ENCODE measurements at regions of chr1 and their contacts with region 1.

Region 1: DNA sequence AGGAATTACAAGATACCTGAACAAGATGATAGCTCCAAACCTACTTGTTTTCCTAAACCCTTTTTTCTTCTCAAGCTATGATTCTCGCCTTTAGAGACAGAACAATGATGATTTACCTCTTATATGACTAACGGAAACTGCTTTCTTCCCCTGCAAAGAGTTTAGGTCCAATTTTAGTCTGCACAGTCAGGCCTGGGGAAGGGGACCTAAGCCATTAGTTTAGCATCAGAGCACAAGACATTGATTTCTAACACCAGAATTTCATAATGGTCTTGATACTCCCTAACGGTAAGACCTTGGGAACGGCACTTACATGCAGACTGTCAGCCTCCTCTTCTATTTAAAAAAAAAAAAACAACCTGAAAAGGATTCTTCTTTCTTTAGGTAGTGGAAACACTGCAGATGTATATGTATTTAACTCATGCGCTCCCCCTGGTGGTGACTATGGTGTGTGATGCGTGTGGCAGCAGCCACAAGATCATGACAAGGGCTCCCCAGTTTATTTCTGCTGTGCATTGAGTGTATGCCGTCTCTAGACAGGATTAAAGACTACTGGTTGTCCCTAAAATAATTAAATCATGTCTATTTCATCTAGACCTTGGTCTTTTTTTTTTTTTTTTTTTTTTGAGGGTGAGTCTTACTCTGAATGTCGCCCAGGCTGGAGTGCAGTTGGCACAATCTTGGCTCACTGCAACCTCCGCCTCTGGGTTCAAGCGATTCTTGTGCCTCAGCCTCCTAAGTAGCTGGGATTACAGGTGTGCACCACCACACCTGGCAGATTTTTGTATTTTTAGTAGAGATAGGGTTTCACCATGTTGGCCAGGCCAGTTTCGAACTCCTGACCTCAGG is 37.3 kb upstream of the TMEM222 start:
- DNase-seq: peak; percentile 89
- ATAC-seq: peak; percentile 87
- H3K4me3 ChIP-seq: no peak overlapping the region
- H3K27ac ChIP-seq: no peak overlapping the region
- H3K4me1 ChIP-seq: no peaks in the 10 kb centered on the region
- H3K27me3 ChIP-seq: no peaks in the 10 kb centered on the region
- CTCF ChIP-seq: peak; percentile 87

Region 2: DNA sequence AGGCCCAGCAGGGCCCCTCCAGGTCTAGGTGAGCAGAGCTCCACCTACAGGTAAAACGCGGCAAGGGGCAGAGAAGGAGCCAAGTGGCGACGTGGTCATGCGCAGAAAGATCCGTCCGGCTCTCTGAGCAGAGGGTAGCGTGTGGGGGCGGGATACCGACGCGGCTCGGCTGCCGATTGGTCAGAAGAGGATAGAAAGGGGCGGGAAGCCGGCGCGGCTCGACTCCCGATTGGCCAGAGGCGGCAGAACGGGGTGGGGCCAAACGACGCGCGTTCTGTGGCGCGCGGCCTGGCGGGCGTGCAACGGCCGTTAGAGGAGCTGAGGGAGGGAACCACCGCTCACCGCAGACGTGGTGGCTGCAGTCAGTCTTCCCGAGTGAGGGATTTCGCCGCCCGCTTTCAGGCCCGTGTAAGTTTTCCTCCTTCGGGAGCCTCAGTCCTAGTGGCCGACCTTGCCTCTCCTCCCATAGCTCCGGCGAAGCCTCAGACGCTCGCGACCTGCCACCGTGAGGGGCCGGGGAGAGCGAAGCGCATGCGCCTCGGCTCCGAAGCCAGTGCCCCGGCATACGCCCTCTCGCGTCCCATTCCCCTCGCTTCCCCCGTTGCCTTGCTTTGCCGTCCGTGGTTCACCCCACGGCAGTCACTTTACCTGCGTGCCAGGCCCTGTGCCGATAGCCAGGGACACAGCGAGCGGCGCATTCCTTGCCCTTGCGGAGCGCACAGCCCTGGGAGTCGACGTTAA is 1050.6 kb before region 1 on chr1 and contains the start of gene CEP85:
- CTCF ChIA-PET with region 1: no interaction called
- POLR2A ChIA-PET with region 1: no interaction called
- intact Hi-C with region 1: no loop called
- DNase-seq: peak; percentile 99
- ATAC-seq: peak; percentile 93
- H3K4me3 ChIP-seq: peak within 1 kb of the TSS; percentile 96
- H3K27ac ChIP-seq: peak within 1 kb of the TSS; percentile 48
- H3K4me1 ChIP-seq: peaks cover 25% of the 10 kb centered on the region
- H3K27me3 ChIP-seq: no peaks in the 10 kb centered on the region
- CTCF ChIP-seq: peak; percentile 85
- total RNA-seq, gene CEP85: 30.6 and 30.8 TPM in 2 replicates

Region 3: GRCh38 chr1:27102707-27103491 is 181.8 kb before region 1 on chr1:
- CTCF ChIA-PET with region 1: interaction called, 4 read pairs
- POLR2A ChIA-PET with region 1: no interaction called
- intact Hi-C with region 1: loop called (anchors 1 kb)
- DNase-seq: peak; percentile 80
- ATAC-seq: peak; percentile 45
- H3K4me3 ChIP-seq: no peak overlapping the region
- H3K27ac ChIP-seq: no peak overlapping the region
- H3K4me1 ChIP-seq: peaks cover 35% of the 10 kb centered on the region
- H3K27me3 ChIP-seq: no peaks in the 10 kb centered on the region
- CTCF ChIP-seq: peak; percentile 95

Region 4: GRCh38 chr1:27154991-27155781 is 129.5 kb before region 1 on chr1 and contains the start of gene SLC9A1:
- CTCF ChIA-PET with region 1: interaction called, 17 read pairs
- POLR2A ChIA-PET with region 1: no interaction called
- intact Hi-C with region 1: no loop called
- DNase-seq: peak; percentile 87
- ATAC-seq: peak; percentile 86
- H3K4me3 ChIP-seq: peak within 1 kb of the TSS; percentile 81
- H3K27ac ChIP-seq: peak within 1 kb of the TSS; percentile 48
- H3K4me1 ChIP-seq: peaks cover 43% of the 10 kb centered on the region
- H3K27me3 ChIP-seq: no peaks in the 10 kb centered on the region
- CTCF ChIP-seq: peak; percentile 83
- total RNA-seq, gene SLC9A1: 25.2 and 26.4 TPM in 2 replicates

Region 5: GRCh38 chr1:27163103-27163502 is 121.5 kb before region 1 on chr1:
- CTCF ChIA-PET with region 1: interaction called, 10 read pairs
- POLR2A ChIA-PET with region 1: no interaction called
- intact Hi-C with region 1: no loop called
- DNase-seq: peak; percentile 96
- ATAC-seq: peak; percentile 95
- H3K4me3 ChIP-seq: no peak overlapping the region
- H3K27ac ChIP-seq: peak overlapping the region; percentile 83
- H3K4me1 ChIP-seq: peaks cover 24% of the 10 kb centered on the region
- H3K27me3 ChIP-seq: no peaks in the 10 kb centered on the region
- CTCF ChIP-seq: no peak

Measured in PC-3 (cell line).